MCF 10A (cell line): ENCODE measurements at regions of chr17 and their contacts with region 1.

Region 1: DNA sequence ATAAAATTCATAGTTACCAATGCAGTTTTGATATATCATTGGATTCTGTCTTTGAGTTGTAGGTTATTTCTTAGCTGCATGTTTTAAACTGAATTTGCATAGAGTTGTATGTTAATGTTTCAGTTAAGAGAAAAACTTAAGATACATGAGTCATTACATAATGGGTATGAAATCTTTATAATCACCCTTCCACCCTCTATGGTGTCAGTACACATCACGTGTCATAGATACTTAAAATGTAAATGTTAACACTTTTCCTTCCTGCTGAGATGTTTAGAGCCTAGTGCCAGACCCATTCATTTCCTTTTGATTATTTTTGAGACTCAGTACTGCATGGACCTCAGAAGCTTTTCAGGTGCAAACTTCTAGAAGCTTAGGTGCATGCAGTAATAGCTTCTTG is 20.5 kb downstream of the ZNF207 start:
- DNase-seq: no peak
- H3K4me3 Mint-ChIP-seq: no peak overlapping the region
- H3K27ac Mint-ChIP-seq: no peak overlapping the region
- H3K4me1 Mint-ChIP-seq: peaks cover 8% of the 10 kb centered on the region
- H3K27me3 Mint-ChIP-seq: no peaks in the 10 kb centered on the region
- CTCF ChIP-seq: no peak

Region 2: GRCh38 chr17:32311028-32311536 is 59.3 kb before region 1 on chr17:
- CTCF ChIA-PET with region 1: no interaction called
- POLR2A ChIA-PET with region 1: no interaction called
- intact Hi-C with region 1: no loop called
- DNase-seq: no peak
- H3K4me3 Mint-ChIP-seq: no peak overlapping the region
- H3K27ac Mint-ChIP-seq: no peak overlapping the region
- H3K4me1 Mint-ChIP-seq: no peaks in the 10 kb centered on the region
- H3K27me3 Mint-ChIP-seq: peaks cover 23% of the 10 kb centered on the region
- CTCF ChIP-seq: no peak

Region 3: DNA sequence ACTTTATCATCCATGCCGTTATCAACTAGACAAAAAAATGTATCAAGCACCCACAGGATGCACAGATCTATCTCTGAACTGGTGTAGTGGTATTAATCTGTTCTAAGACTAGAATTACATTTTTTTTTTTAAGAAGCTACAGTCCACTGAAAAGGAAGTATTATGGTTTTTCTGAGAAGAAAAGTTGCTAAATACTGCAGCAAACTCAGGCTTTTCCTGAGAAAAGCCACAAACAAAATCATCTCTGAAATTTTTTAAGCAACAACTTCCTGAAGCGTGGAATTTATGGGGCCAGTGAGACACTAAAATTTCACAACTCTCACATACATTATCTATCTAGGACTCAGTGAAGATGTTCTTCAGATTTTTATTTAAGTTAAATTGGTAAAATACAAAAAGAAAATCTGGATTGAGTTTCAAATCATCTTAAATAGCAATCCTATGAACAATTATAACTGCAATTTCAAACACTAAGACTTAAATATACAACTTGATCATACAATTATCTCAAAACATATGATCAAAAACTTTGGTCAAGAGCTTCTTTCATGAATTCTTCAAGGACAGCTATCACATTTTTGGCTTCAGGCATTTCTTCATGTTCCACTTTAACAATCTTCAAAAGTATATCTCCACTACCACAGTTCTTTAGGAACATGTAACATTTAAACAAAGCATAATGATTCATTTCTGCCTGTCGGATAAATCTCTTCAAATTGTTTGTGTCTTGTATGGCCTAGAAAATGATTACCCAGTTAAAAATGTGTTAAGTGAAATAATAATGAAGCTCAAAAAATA is 39.0 kb before region 1 on chr17:
- CTCF ChIA-PET with region 1: no interaction called
- POLR2A ChIA-PET with region 1: no interaction called
- intact Hi-C with region 1: no loop called
- DNase-seq: no peak
- H3K4me3 Mint-ChIP-seq: no peak overlapping the region
- H3K27ac Mint-ChIP-seq: no peak overlapping the region
- H3K4me1 Mint-ChIP-seq: peaks cover 5% of the 10 kb centered on the region
- H3K27me3 Mint-ChIP-seq: no peaks in the 10 kb centered on the region
- CTCF ChIP-seq: no peak

Region 4: GRCh38 chr17:32349854-32350665 is 20.4 kb before region 1 on chr17 and contains the start of gene ZNF207:
- CTCF ChIA-PET with region 1: interaction called, 4 read pairs
- POLR2A ChIA-PET with region 1: interaction called, 18 read pairs
- intact Hi-C with region 1: no loop called
- DNase-seq: peak; percentile 97
- H3K4me3 Mint-ChIP-seq: peak within 1 kb of the TSS; percentile 99
- H3K27ac Mint-ChIP-seq: peak within 1 kb of the TSS; percentile 100
- H3K4me1 Mint-ChIP-seq: peaks cover 13% of the 10 kb centered on the region
- H3K27me3 Mint-ChIP-seq: no peaks in the 10 kb centered on the region
- CTCF ChIP-seq: no peak
- total RNA-seq, gene ZNF207: 167 and 179 TPM in 2 replicates